PC-9 (cell line): ENCODE measurements at regions of chr4 and their contacts with region 1.

Region 1: DNA sequence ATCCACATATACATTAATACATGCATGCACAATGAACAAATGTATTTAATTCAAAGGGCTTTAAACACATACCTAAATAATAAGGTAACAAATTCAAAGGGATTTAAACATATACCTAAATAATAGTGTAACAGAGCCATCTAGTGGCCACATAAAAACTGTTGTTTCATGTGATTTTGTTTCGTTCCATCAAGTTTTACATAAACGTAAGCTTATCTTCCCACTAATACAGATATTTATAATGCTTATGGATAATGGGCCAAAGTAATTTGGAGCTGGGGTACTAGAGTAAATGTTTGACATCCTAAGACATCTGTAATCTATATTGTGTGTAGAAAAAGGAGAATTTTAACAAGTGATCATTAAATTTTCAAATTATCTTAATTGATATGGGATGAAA is 82.3 kb downstream of the PRSS12 start:
- DNase-seq: peak in 1 of 2 experiments; percentile 36
- H3K4me3 ChIP-seq: no peak overlapping the region
- H3K27ac ChIP-seq: no peak overlapping the region
- H3K4me1 ChIP-seq: no peaks in the 10 kb centered on the region
- H3K27me3 ChIP-seq: no peaks in the 10 kb centered on the region
- CTCF ChIP-seq: peak; percentile 64

Region 2: GRCh38 chr4:116358588-116359222 is 1911.8 kb before region 1 on chr4:
- CTCF ChIA-PET with region 1: no interaction called
- POLR2A ChIA-PET with region 1: no interaction called
- intact Hi-C with region 1: loop called (anchors 5 kb)
- DNase-seq: peak; percentile 34 to 42
- H3K4me3 ChIP-seq: no peak overlapping the region
- H3K27ac ChIP-seq: no peak overlapping the region
- H3K4me1 ChIP-seq: no peaks in the 10 kb centered on the region
- H3K27me3 ChIP-seq: no peaks in the 10 kb centered on the region
- CTCF ChIP-seq: peak; percentile 60

Region 3: DNA sequence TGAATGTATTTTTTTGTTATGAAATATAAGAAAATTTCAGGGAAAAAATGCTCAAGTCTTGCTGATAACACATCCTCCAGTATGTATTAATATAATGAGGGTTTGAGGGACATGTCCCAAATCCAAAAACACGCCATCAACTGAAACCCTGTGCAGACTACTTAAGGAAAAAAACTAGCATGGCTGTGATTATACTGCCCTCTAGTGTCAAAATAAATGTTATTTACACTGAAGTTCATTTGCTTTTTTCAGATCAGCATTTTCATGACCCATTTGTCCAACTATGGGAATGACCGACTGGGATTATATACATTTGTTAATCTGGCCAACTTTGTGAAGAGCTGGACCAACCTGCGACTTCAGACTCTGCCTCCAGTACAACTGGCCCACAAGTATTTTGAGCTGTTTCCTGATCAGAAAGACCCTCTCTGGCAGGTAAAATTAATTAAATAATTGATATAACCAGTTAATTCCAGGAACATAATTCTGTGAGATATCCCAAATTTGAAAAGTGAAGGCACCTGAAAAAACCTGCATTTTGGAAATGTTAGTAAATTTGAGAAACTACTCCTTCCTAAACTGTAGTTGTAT is 46.2 kb before region 1 on chr4:
- CTCF ChIA-PET with region 1: no interaction called
- POLR2A ChIA-PET with region 1: no interaction called
- intact Hi-C with region 1: no loop called
- DNase-seq: no peak
- H3K4me3 ChIP-seq: no peak overlapping the region
- H3K27ac ChIP-seq: no peak overlapping the region
- H3K4me1 ChIP-seq: no peaks in the 10 kb centered on the region
- H3K27me3 ChIP-seq: no peaks in the 10 kb centered on the region
- CTCF ChIP-seq: peak; percentile 72